Uterus (tissue), 4 donors: ENCODE measurements at regions of chr9 and their contacts with region 1.

Region 1: GRCh38 chr9:33623658-33624586 is 99.9 kb downstream of the ANKRD18B start:
- DNase-seq: peak; percentile 45 to 56
- H3K4me3 ChIP-seq: no peak overlapping the region
- H3K27ac ChIP-seq: no peak overlapping the region
- H3K4me1 ChIP-seq: no peaks in the 10 kb centered on the region
- H3K27me3 ChIP-seq: no peaks in the 10 kb centered on the region
- CTCF ChIP-seq: peak; percentile 71 to 78 (median 76)
- POLR2A ChIP-seq: no peak

Region 2: DNA sequence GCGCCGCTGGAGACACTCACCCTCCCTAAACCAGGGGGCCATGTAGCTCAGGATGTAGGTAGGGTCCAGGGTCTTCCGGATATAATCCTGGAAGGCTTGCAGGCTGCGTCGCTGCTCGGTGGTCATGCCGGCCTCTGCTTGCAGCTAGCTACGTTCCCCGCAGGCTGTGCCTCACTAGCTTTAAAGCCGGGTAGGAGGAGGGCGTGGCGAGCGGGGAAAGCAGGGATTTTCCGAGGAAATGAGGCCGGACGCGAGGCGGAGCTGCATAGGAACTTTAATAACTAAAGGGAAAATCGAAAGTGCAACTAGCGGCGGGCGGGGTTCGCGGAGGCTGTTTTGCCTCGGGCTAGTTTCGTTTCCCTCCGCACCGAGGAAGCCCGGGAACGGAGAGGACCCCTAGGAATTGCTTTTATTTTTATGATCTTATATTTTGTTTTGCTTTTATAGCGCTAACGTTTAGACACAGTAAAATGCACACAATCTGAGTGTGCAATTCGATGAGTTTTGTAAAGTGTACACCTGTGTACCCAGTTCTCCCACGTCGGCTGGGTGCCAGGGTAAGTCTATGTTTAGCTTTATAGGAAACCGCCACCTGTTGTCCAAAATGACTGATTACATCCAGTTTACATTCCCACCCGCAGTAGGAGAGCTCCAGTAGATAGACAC is 1097.7 kb before region 1 on chr9 and contains the start of gene RIGI:
- intact Hi-C with region 1: no loop called
- DNase-seq: peak; percentile 93 to 95
- H3K4me3 ChIP-seq: peak within 1 kb of the TSS; percentile 54 to 77
- H3K27ac ChIP-seq: peak within 1 kb of the TSS; percentile 77 to 98
- H3K4me1 ChIP-seq: peaks cover 0 to 3% of the 10 kb centered on the region in 2 donors
- H3K27me3 ChIP-seq: no peaks in the 10 kb centered on the region
- CTCF ChIP-seq: peak; percentile 23 to 39 (median 28)
- POLR2A ChIP-seq: peak; percentile 57 to 66
- total RNA-seq, gene RIGI: 2.6 to 22.5 (median 14.3) TPM

Region 3: DNA sequence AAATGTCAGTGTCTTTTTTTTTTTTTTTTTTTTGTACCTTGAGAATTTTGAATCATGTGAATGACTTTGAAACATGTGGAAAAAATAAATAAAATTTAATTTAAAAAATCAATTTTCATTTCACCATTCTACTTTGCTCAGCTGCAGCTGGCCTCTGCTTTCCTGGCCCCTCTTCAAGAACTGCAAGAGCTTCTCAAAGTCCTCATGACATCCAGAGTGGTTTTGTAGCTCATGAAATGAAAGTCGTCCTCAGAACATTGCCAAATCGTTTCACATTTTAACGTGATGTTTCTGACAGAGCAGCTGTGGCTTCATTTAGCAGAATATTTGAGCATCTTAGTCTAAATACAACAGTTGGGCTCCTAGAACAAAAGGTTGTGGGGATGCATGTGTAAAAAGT is 888.4 kb before region 1 on chr9:
- intact Hi-C with region 1: no loop called
- DNase-seq: no peak
- H3K4me3 ChIP-seq: no peak overlapping the region
- H3K27ac ChIP-seq: no peak overlapping the region
- H3K4me1 ChIP-seq: no peaks in the 10 kb centered on the region
- H3K27me3 ChIP-seq: no peaks in the 10 kb centered on the region
- CTCF ChIP-seq: no peak
- POLR2A ChIP-seq: no peak

Region 4: GRCh38 chr9:33721674-33722358 is 97.9 kb after region 1 on chr9:
- intact Hi-C with region 1: loop called (anchors 10 kb)
- DNase-seq: peak; percentile 73 to 82
- H3K4me3 ChIP-seq: no peak overlapping the region
- H3K27ac ChIP-seq: no peak overlapping the region
- H3K4me1 ChIP-seq: peaks cover 0 to 3% of the 10 kb centered on the region in 2 donors
- H3K27me3 ChIP-seq: no peaks in the 10 kb centered on the region
- CTCF ChIP-seq: peak; percentile 98 to 100 (median 99)
- POLR2A ChIP-seq: peak in 1 of 2 donors; percentile 19

Region 5: GRCh38 chr9:33843312-33843961 is 219.5 kb after region 1 on chr9:
- intact Hi-C with region 1: no loop called
- DNase-seq: no peak
- H3K4me3 ChIP-seq: no peak overlapping the region
- H3K27ac ChIP-seq: no peak overlapping the region
- H3K4me1 ChIP-seq: peaks cover 0 to 3% of the 10 kb centered on the region in 2 donors
- H3K27me3 ChIP-seq: no peaks in the 10 kb centered on the region
- CTCF ChIP-seq: no peak
- POLR2A ChIP-seq: no peak